HAP-1 (cell line): ENCODE measurements at regions of chr7 and their contacts with region 1.

Region 1: DNA sequence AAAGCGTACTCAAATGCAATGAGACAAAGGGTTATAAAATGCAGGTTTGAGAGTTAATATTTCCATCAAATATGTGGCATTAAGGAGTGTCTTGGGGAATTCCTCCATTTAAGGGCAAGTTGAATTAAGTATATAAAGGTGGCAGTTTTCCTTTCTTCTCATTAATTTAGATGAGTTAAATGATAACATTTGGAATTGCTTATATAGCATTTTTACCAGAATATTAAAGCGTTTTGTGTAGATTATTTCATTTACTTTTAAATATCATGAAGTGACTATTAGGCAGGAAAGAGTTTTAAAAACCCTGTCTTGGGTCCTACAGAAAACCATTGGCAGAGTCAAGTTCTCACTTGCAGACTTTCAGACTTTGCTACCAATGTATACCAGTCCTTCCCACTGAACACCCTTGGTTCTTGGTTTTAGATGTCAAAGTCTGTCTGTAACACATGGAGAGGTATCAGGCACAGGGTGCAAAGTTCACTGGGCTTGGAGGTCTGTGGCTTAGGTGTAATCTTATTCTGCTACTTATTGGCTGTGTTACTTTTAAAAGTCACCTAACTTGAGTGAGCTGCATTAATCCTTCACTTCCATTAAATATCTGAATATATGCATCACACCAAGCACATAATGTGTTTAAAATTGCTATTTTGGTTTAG is 51.0 kb downstream of the ASB4 start:
- DNase-seq: no peak
- H3K4me3 ChIP-seq: no peak overlapping the region
- H3K4me1 ChIP-seq: no peaks in the 10 kb centered on the region
- H3K27me3 ChIP-seq: peaks cover 22% of the 10 kb centered on the region

Region 2: GRCh38 chr7:95684037-95684436 is 147.3 kb after region 1 on chr7:
- in situ Hi-C with region 1: loop called (anchors 5 kb)
- DNase-seq: peak in 1 of 2 experiments; percentile 38
- H3K4me3 ChIP-seq: no peak overlapping the region
- H3K4me1 ChIP-seq: peaks cover 3% of the 10 kb centered on the region; the same call in 1 of the 2 replicates
- H3K27me3 ChIP-seq: no peaks in the 10 kb centered on the region

Region 3: GRCh38 chr7:95804052-95804451 is 267.3 kb after region 1 on chr7:
- in situ Hi-C with region 1: no loop called
- DNase-seq: no peak
- H3K4me3 ChIP-seq: no peak overlapping the region
- H3K4me1 ChIP-seq: peaks cover 7% of the 10 kb centered on the region
- H3K27me3 ChIP-seq: no peaks in the 10 kb centered on the region

Region 4: DNA sequence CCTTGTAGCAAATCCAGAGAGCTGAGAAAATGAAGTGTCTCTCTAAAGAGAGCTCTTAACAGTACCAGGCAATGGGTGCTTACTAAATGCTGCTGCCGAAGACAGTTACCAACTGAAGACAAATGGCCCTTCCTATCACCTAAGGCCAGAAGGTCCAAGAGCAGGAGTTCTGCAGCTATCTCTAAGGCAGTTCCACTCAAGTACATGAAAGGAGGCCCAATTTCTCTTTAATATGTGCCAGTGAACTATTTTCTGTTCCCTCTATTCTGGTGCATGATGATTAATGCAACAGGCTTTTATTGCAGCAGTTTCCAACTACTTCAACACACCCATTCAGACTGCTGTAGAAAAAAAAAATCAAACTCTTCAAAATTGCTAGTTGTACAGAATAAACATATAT is 662.6 kb after region 1 on chr7:
- in situ Hi-C with region 1: no loop called
- DNase-seq: no peak
- H3K4me3 ChIP-seq: no peak overlapping the region
- H3K4me1 ChIP-seq: no peaks in the 10 kb centered on the region
- H3K27me3 ChIP-seq: no peaks in the 10 kb centered on the region